HCT116 (cell line): ENCODE measurements at regions of chr1 and their contacts with region 1.

Region 1: GRCh38 chr1:27192039-27192529 is 37.2 kb upstream of the SLC9A1 start:
- DNase-seq: peak; percentile 54
- ATAC-seq: peak; percentile 81
- H3K4me3 ChIP-seq: peak overlapping the region in 1 of 2 experiments; percentile 11; a peak in 1 of 4 replicates
- H3K27ac ChIP-seq: peak overlapping the region; percentile 35
- H3K4me1 ChIP-seq: peaks cover 18 to 25% of the 10 kb centered on the region in 2 experiments
- H3K27me3 ChIP-seq: no peaks in the 10 kb centered on the region
- CTCF ChIP-seq: no peak
- POLR2A ChIP-seq: no peak
- RAD21 ChIP-seq: no peak

Region 2: DNA sequence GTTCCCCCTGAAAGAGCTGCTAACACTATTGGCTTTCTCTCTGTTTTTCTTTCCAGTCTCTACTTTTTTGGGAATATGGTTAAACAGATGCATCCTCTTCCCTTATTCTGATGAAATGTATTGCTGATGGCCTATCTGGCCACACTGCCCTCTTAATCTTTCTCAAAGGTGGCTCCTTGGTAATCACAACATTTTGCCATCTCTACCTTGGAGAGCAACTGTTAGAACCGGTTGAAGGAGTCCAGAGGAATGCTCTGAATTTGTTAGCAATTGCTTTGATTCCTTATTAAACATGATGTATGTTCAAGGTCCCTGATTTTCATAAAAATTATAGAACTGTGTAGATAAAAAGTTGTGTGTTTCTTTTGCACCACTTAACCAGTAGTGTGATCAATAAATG is 546.4 kb before region 1 on chr1:
- CTCF ChIA-PET with region 1: no interaction called
- POLR2A ChIA-PET with region 1: no interaction called
- RAD21 ChIA-PET with region 1: no interaction called
- intact Hi-C with region 1: no loop called
- DNase-seq: no peak
- ATAC-seq: no peak
- H3K4me3 ChIP-seq: no peak overlapping the region
- H3K27ac ChIP-seq: no peak overlapping the region
- H3K4me1 ChIP-seq: no peaks in the 10 kb centered on the region
- H3K27me3 ChIP-seq: no peaks in the 10 kb centered on the region
- CTCF ChIP-seq: no peak
- POLR2A ChIP-seq: no peak
- RAD21 ChIP-seq: no peak

Region 3: DNA sequence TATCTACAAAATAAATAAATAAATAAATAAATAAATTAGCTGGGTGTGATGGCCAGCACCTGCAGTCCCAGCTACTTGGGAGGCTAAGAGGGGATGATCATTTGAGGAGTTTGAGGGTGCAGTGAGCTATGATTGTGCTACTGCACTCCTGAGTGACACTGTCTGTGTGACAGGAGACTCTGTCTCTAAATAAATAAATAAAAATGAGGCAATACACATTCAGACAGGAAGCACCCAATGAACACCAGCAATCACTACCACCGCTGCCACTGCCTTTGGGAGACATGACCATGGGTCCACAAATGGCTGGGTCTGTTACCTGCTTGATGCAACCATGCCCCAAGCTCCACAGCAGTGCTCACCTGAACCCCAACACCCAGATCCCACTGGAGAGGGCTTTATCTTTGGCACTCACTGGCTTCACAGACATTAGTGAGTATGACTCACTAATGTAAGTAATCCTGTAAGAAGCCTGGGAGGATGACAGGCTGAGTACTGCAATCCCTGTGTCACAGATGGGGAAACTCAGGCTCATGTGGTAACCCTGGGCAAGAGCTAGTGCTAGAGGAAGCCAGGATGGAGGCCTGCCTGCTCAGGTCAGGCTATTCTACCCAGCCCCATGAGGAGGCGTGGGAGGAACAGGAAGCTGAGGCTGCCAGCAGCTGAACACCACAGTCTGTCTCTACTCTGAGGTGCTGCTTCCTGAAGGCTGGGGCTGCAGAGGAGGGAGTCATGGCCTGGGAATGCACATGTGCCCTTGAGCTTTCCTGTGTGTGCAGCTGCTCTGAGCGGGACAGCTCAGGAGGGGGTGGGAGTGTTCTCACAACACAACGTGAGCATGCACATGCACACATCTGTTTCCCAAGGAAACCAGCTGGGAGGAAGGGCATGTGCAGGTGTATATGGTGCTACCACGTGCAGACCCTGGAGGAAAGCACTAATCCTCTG is 80.2 kb before region 1 on chr1:
- CTCF ChIA-PET with region 1: interaction called, 4 read pairs
- POLR2A ChIA-PET with region 1: no interaction called
- RAD21 ChIA-PET with region 1: no interaction called
- intact Hi-C with region 1: loop called (anchors 5 kb)
- DNase-seq: peak; percentile 73
- ATAC-seq: peak; percentile 91
- H3K4me3 ChIP-seq: peak overlapping the region in 1 of 2 experiments; percentile 31; a peak in 2 of 4 replicates
- H3K27ac ChIP-seq: peak overlapping the region; percentile 62
- H3K4me1 ChIP-seq: peaks cover 17 to 23% of the 10 kb centered on the region in 2 experiments
- H3K27me3 ChIP-seq: no peaks in the 10 kb centered on the region
- CTCF ChIP-seq: peak in 2 of 3 experiments; percentile 12 to 40; a peak in 2 of 6 replicates
- POLR2A ChIP-seq: no peak
- RAD21 ChIP-seq: peak; percentile 83

Region 4: GRCh38 chr1:27290581-27290980 is 98.5 kb after region 1 on chr1:
- CTCF ChIA-PET with region 1: no interaction called
- POLR2A ChIA-PET with region 1: no interaction called
- RAD21 ChIA-PET with region 1: no interaction called
- intact Hi-C with region 1: no loop called
- DNase-seq: no peak
- ATAC-seq: no peak
- H3K4me3 ChIP-seq: no peak overlapping the region
- H3K27ac ChIP-seq: no peak overlapping the region
- H3K4me1 ChIP-seq: peaks cover 0 to 9% of the 10 kb centered on the region in 2 experiments; a peak in 1 of 4 replicates
- H3K27me3 ChIP-seq: no peaks in the 10 kb centered on the region
- CTCF ChIP-seq: no peak
- POLR2A ChIP-seq: no peak
- RAD21 ChIP-seq: no peak